ENCODE measurements at regions of chr3 and their contacts with region 1.

Region 1: DNA sequence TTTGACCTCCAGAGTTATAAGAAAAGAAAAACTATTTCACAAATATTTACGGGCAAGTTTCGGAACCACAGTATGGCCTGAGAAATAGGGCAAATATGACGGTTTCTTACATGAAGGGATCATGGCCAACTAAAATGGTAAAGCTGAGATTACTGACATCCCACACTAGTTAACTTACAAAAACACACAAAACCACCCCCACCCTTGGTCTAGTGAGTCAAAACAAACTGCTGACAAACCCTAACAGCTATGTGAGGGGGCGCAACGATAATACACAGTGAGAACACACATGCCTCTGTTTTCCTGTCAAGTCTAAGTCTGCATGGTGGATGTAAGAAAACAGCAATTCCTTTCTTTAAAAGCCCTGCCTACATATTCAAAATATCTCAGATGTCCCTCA is 32.3 kb downstream of the CBLB start:
- DNase-seq: peak; percentile 74
- H3K4me3 ChIP-seq: no peak overlapping the region
- H3K27ac ChIP-seq: no peak overlapping the region
- H3K27me3 ChIP-seq: no peaks in the 10 kb centered on the region
- CTCF ChIP-seq: no peak

Region 2: GRCh38 chr3:105542282-105543019 is 294.1 kb before region 1 on chr3:
- CTCF ChIA-PET with region 1: no interaction called
- POLR2A ChIA-PET with region 1: no interaction called
- DNase-seq: no peak
- H3K4me3 ChIP-seq: no peak overlapping the region
- H3K27ac ChIP-seq: no peak overlapping the region
- H3K27me3 ChIP-seq: no peaks in the 10 kb centered on the region
- CTCF ChIP-seq: no peak

Region 3: GRCh38 chr3:105823149-105823869 is 13.2 kb before region 1 on chr3:
- CTCF ChIA-PET with region 1: interaction called, 4 read pairs
- POLR2A ChIA-PET with region 1: interaction called, 13 read pairs
- DNase-seq: peak; percentile 85
- H3K4me3 ChIP-seq: no peak overlapping the region
- H3K27ac ChIP-seq: peak overlapping the region; percentile 79
- H3K27me3 ChIP-seq: no peaks in the 10 kb centered on the region
- CTCF ChIP-seq: no peak

Measured in AG04450 (cell line).